ENCODE measurements at regions of chr12 and their contacts with region 1.

Region 1: DNA sequence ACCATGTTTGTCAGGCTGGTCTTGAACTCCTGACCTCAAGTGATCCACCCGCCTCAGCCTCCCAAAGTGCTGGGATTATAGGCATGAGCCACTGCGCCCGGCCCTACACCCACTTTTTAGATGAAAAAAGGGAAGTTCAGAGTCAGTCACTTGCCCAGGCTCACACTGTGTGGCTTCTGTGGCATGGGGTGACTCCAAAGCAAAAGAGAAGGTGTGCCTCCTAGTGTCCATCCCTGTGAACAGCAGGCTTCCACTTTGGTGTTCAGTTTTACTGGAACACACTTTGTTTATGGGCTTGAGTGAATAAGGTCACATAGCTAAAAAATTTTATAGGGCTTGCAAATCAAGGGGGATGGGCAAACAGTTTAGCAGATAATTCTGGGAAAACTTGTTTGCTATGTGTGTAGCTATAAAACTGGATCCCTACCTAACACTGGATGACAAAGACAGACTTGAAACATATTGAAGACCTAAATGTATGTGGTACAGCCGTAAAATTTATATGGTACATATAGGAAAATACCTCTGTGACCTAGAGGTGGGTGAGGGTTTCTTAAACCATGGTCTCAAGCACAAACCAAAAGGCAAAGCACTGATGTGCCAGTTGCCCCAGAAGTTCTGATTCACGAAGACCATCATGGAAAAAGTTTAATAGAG is 54.9 kb downstream of the EID3 start:
- DNase-seq: peak; percentile 79
- H3K4me3 Mint-ChIP-seq: no peak overlapping the region
- H3K27ac Mint-ChIP-seq: no peak overlapping the region
- H3K4me1 Mint-ChIP-seq: peaks cover 2% of the 10 kb centered on the region
- H3K27me3 Mint-ChIP-seq: no peaks in the 10 kb centered on the region

Region 2: DNA sequence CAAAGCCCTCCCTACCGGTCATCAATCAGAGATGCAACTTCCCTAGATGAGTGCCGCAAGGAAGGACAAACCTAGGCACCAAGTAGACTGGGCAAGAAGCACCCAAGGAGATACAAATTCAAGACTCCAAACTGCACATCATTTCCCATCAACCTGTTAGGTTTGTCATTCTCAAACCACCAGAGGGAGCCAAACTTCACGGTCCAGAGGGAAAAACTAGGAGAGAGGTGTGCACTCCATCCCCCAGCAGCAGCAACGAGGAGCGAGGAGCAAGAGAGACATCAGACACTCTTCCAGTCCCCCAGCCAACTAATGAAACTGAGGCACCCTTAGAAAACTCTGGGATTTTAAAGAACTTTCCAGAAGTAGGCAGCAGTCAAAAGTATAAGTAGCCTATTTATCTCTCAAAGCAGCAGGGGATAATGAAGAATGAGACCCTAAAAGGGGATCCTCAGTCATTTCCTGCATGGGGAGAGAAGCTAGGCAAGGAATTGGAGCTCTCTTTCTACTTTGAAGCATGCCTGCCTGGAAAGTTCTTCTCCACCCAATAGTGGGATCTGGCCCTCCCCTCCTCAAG is 480.5 kb before region 1 on chr12:
- CTCF ChIA-PET with region 1: no interaction called
- POLR2A ChIA-PET with region 1: no interaction called
- intact Hi-C with region 1: loop called (anchors 2 kb)
- DNase-seq: peak; percentile 70
- H3K4me3 Mint-ChIP-seq: no peak overlapping the region
- H3K27ac Mint-ChIP-seq: no peak overlapping the region
- H3K4me1 Mint-ChIP-seq: peaks cover 18% of the 10 kb centered on the region
- H3K27me3 Mint-ChIP-seq: no peaks in the 10 kb centered on the region

Region 3: GRCh38 chr12:104201238-104202001 is 157.1 kb before region 1 on chr12:
- CTCF ChIA-PET with region 1: interaction called, 14 read pairs
- POLR2A ChIA-PET with region 1: no interaction called
- intact Hi-C with region 1: loop called (anchors 1 kb)
- DNase-seq: peak; percentile 50
- H3K4me3 Mint-ChIP-seq: no peak overlapping the region
- H3K27ac Mint-ChIP-seq: no peak overlapping the region
- H3K4me1 Mint-ChIP-seq: no peaks in the 10 kb centered on the region
- H3K27me3 Mint-ChIP-seq: peaks cover 8% of the 10 kb centered on the region

Measured in activated CD4-positive, alpha-beta memory T cell treated with anti-CD3 and anti-CD28 coated beads for 36 hours (primary cell).